ENCODE measurements at regions of chr11 and their contacts with region 1.

Region 1: GRCh38 chr11:64846998-64847666 is 2.7 kb upstream of the CDC42BPG start:
- DNase-seq: peak; percentile 83
- H3K4me3 Mint-ChIP-seq: no peak overlapping the region
- H3K27ac Mint-ChIP-seq: no peak overlapping the region
- H3K4me1 Mint-ChIP-seq: peaks cover 32% of the 10 kb centered on the region
- H3K27me3 Mint-ChIP-seq: peaks cover 2% of the 10 kb centered on the region

Region 2: GRCh38 chr11:64864473-64865285 is 17.5 kb after region 1 on chr11:
- intact Hi-C with region 1: loop called (anchors 1 kb)
- DNase-seq: no peak
- H3K4me3 Mint-ChIP-seq: peak overlapping the region; percentile 58
- H3K27ac Mint-ChIP-seq: peak overlapping the region; percentile 92
- H3K4me1 Mint-ChIP-seq: peaks cover 79% of the 10 kb centered on the region
- H3K27me3 Mint-ChIP-seq: no peaks in the 10 kb centered on the region

Region 3: DNA sequence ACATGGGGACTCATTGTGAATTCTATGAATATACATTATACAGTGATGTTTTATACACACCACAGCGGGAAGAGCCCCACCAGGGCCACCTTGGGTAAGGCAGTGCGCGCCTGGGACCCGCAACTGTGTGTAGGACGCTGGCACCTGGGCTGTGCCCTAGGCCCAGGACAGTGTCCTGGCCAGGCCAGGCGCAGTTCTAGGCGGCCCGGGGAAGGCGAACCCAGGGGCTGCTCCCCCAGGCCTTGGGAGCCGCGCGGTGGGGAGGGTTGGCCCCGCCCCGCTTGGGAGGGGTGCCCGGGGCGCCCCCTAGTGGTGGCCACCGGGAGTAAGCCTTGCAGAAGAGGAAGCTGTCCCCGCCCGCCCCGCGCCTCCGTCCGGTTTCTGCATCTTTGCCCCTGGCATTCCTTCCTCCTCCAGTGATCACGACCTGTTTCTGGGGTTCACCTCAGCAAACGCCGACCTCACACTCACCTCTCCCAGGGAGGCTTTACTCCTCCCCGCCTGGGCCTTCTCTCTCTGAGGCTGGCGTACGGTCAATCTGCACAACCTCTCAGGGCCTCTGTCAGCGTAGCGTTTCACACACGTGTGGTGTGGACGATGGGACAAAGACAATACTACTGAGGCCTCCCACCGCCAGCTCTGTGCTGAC is 40.7 kb after region 1 on chr11:
- intact Hi-C with region 1: loop called (anchors 1 kb)
- DNase-seq: peak; percentile 81
- H3K4me3 Mint-ChIP-seq: peak overlapping the region; percentile 80
- H3K27ac Mint-ChIP-seq: peak overlapping the region; percentile 86
- H3K4me1 Mint-ChIP-seq: peaks cover 28% of the 10 kb centered on the region
- H3K27me3 Mint-ChIP-seq: no peaks in the 10 kb centered on the region

Region 4: DNA sequence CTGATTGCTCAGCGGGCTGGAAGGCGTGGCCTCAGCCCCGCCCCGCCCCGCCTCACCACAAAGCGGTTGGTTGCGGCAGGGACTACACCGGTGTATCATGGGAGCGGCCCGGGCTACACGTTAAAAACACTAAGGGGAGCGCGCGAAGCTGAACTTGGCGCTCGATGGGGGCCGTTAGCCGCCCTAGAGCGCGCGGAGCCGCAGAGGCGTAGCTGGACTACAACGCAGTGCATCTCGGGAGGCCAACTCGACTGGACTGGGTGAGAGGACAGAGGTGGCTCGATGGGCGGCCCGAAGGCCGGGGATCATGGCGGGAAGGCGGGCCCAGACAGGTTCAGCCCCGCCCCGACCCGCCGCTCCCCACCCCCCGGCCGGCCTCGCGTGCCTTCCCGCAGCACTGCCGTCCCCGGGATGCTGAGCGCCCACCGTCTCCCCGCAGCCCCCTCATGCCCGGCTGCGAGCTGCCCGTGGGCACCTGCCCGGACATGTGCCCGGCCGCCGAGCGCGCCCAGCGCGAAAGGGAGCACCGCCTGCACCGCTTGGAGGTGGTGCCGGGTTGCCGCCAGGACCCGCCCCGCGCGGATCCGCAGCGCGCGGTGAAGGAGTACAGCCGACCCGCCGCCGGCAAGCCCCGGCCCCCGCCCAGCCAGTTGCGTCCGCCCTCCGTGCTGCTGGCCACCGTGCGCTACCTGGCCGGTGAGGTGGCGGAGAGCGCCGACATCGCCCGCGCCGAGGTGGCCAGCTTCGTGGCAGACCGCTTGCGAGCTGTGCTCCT is 193.9 kb after region 1 on chr11 and contains the start of gene SAC3D1:
- intact Hi-C with region 1: loop called (anchors 1 kb)
- DNase-seq: peak; percentile 90
- H3K4me3 Mint-ChIP-seq: peak within 1 kb of the TSS; percentile 90
- H3K27ac Mint-ChIP-seq: peak within 1 kb of the TSS; percentile 93
- H3K4me1 Mint-ChIP-seq: peaks cover 19% of the 10 kb centered on the region
- H3K27me3 Mint-ChIP-seq: no peaks in the 10 kb centered on the region
- total RNA-seq, gene SAC3D1: 17.4 and 17.7 TPM in 2 replicates